ENCODE measurements at regions of chr7 and their contacts with region 1.

Region 1: DNA sequence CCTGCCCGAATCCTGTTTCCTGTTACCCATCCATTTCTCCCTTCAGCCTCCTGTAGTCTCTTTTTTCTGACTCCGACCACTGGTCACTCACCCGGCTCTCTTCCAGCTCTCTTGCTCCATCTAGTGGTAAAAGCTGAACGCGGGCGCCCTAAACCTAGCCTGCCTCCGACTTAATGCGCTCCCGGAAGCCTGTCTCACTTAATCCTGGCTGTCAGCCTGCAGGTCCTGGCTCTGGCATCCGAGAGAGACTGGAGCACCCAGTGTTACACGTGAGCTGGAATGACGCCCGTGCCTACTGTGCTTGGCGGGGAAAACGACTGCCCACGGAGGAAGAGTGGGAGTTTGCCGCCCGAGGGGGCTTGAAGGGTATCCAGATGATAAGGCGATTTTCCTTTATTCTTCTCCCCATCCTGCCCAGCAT is 10.3 kb downstream of the SUMF2 start:
- DNase-seq: peak; percentile 42 to 77 (median 55)
- ATAC-seq: peak; percentile 82
- H3K4me3 ChIP-seq: no peak overlapping the region
- H3K4me3 Mint-ChIP-seq: no peak overlapping the region
- H3K27ac ChIP-seq: no peak overlapping the region
- H3K27ac Mint-ChIP-seq: no peak overlapping the region
- H3K4me1 ChIP-seq: peaks cover 10% of the 10 kb centered on the region
- H3K4me1 Mint-ChIP-seq: peaks cover 6% of the 10 kb centered on the region
- H3K27me3 ChIP-seq: no peaks in the 10 kb centered on the region
- H3K27me3 Mint-ChIP-seq: no peaks in the 10 kb centered on the region
- CTCF ChIP-seq: peak; percentile 95

Region 2: DNA sequence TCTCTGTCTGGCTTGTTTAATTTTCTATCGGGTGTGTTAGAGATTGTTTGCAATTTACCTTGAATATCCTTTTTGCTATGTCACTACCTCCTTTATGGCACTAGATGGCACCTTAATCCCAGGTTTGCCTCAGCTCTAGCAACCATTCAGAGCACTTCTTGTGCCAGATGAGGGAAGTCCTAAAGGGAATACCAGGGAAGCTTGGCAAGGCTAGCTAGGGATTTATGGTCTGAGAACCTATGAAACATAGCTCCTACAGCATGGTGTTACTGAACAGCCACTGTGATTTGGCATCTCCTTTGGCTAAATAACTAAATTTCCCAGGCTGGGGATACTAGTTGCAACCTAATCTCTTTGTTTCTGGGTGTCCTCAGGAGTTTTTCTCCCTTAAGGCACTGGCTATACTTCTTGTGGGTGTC is 433.1 kb before region 1 on chr7:
- CTCF ChIA-PET with region 1: interaction called, 3 read pairs
- POLR2A ChIA-PET with region 1: interaction called, 3 read pairs
- intact Hi-C with region 1: loop called in 1 of 2 experiments (anchors 1 kb)
- DNase-seq: peak in 10 of 14 experiments; percentile 4 to 79 (median 14)
- ATAC-seq: peak; percentile 87
- H3K4me3 ChIP-seq: no peak overlapping the region
- H3K4me3 Mint-ChIP-seq: no peak overlapping the region
- H3K27ac ChIP-seq: no peak overlapping the region
- H3K27ac Mint-ChIP-seq: no peak overlapping the region
- H3K4me1 ChIP-seq: peaks cover 6% of the 10 kb centered on the region
- H3K4me1 Mint-ChIP-seq: peaks cover 6% of the 10 kb centered on the region
- H3K27me3 ChIP-seq: no peaks in the 10 kb centered on the region
- H3K27me3 Mint-ChIP-seq: no peaks in the 10 kb centered on the region
- CTCF ChIP-seq: peak; percentile 80

Region 3: GRCh38 chr7:55996856-55997500 is 77.4 kb before region 1 on chr7:
- CTCF ChIA-PET with region 1: interaction called, 13 read pairs
- POLR2A ChIA-PET with region 1: no interaction called
- intact Hi-C with region 1: no loop called
- DNase-seq: no peak
- ATAC-seq: no peak
- H3K4me3 ChIP-seq: no peak overlapping the region
- H3K4me3 Mint-ChIP-seq: no peak overlapping the region
- H3K27ac ChIP-seq: peak overlapping the region in 1 of 2 donors; percentile 11
- H3K27ac Mint-ChIP-seq: no peak overlapping the region
- H3K4me1 ChIP-seq: no peaks in the 10 kb centered on the region
- H3K4me1 Mint-ChIP-seq: no peaks in the 10 kb centered on the region
- H3K27me3 ChIP-seq: no peaks in the 10 kb centered on the region
- H3K27me3 Mint-ChIP-seq: no peaks in the 10 kb centered on the region
- CTCF ChIP-seq: no peak

Region 4: GRCh38 chr7:56003749-56004148 is 70.6 kb before region 1 on chr7:
- CTCF ChIA-PET with region 1: interaction called, 18 read pairs
- POLR2A ChIA-PET with region 1: interaction called, 3 read pairs
- intact Hi-C with region 1: loop called (anchors 1 kb)
- DNase-seq: no peak
- ATAC-seq: no peak
- H3K4me3 ChIP-seq: no peak overlapping the region
- H3K4me3 Mint-ChIP-seq: no peak overlapping the region
- H3K27ac ChIP-seq: no peak overlapping the region
- H3K27ac Mint-ChIP-seq: no peak overlapping the region
- H3K4me1 ChIP-seq: no peaks in the 10 kb centered on the region
- H3K4me1 Mint-ChIP-seq: no peaks in the 10 kb centered on the region
- H3K27me3 ChIP-seq: no peaks in the 10 kb centered on the region
- H3K27me3 Mint-ChIP-seq: no peaks in the 10 kb centered on the region
- CTCF ChIP-seq: no peak

Region 5: GRCh38 chr7:56009695-56010094 is 64.7 kb before region 1 on chr7:
- CTCF ChIA-PET with region 1: interaction called, 18 read pairs
- POLR2A ChIA-PET with region 1: interaction called, 3 read pairs
- intact Hi-C with region 1: loop called (anchors 1 kb)
- DNase-seq: no peak
- ATAC-seq: no peak
- H3K4me3 ChIP-seq: no peak overlapping the region
- H3K4me3 Mint-ChIP-seq: no peak overlapping the region
- H3K27ac ChIP-seq: no peak overlapping the region
- H3K27ac Mint-ChIP-seq: no peak overlapping the region
- H3K4me1 ChIP-seq: no peaks in the 10 kb centered on the region
- H3K4me1 Mint-ChIP-seq: no peaks in the 10 kb centered on the region
- H3K27me3 ChIP-seq: no peaks in the 10 kb centered on the region
- H3K27me3 Mint-ChIP-seq: no peaks in the 10 kb centered on the region
- CTCF ChIP-seq: no peak

Region 6: GRCh38 chr7:56033671-56034432 is 40.5 kb before region 1 on chr7:
- CTCF ChIA-PET with region 1: no interaction called
- POLR2A ChIA-PET with region 1: no interaction called
- intact Hi-C with region 1: loop called (anchors 2 to 5 kb)
- DNase-seq: peak; percentile 52 to 87 (median 70)
- ATAC-seq: peak; percentile 98
- H3K4me3 ChIP-seq: peak overlapping the region; percentile 67
- H3K4me3 Mint-ChIP-seq: peak overlapping the region; percentile 85
- H3K27ac ChIP-seq: peak overlapping the region in 1 of 2 donors; percentile 30
- H3K27ac Mint-ChIP-seq: peak overlapping the region; percentile 36
- H3K4me1 ChIP-seq: peaks cover 12% of the 10 kb centered on the region
- H3K4me1 Mint-ChIP-seq: peaks cover 6% of the 10 kb centered on the region
- H3K27me3 ChIP-seq: no peaks in the 10 kb centered on the region
- H3K27me3 Mint-ChIP-seq: no peaks in the 10 kb centered on the region
- CTCF ChIP-seq: peak; percentile 37

Region 7: DNA sequence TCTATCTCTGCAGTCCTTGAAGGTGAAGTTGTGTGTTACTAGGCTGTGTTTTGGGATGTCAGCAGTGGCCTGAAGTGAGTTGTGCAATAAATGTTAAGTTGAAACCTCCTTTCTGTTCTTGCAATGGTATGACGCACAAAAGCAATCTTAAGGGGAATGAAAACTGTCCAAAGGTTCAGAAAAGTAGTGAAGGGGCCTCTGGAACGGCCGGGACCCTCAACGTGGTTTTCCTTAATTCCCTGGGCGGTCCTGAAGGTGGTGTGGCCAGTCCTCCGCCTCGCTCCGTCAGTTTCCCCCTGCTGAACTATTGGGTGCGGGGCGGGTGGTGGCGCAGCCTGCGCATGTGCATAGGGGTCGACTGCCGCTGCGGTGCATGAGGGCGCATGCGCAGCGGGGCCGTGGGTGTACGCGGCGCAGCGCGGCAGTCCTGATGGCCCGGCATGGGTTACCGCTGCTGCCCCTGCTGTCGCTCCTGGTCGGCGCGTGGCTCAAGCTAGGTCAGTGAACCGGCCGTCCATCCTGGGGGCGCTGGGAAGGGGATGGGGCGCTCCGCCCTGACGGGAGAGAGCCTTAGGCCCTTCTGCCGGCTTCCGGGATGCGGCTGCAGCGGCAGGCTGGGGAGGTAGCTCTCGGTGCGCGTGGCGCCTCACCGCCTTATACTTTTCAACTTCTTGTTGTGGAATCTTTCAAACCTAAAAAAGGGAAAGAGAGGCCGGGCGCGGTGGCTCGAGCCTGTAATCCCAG is 10.3 kb before region 1 on chr7 and contains the start of gene SUMF2:
- CTCF ChIA-PET with region 1: interaction called, 12 read pairs
- POLR2A ChIA-PET with region 1: interaction called, 13 read pairs
- intact Hi-C with region 1: no loop called
- DNase-seq: peak; percentile 81 to 97 (median 89)
- ATAC-seq: peak; percentile 89
- H3K4me3 ChIP-seq: peak within 1 kb of the TSS; percentile 95
- H3K4me3 Mint-ChIP-seq: peak within 1 kb of the TSS; percentile 93
- H3K27ac ChIP-seq: peak within 1 kb of the TSS; percentile 82 to 84
- H3K27ac Mint-ChIP-seq: peak within 1 kb of the TSS; percentile 95
- H3K4me1 ChIP-seq: peaks cover 25% of the 10 kb centered on the region
- H3K4me1 Mint-ChIP-seq: peaks cover 31% of the 10 kb centered on the region
- H3K27me3 ChIP-seq: no peaks in the 10 kb centered on the region
- H3K27me3 Mint-ChIP-seq: no peaks in the 10 kb centered on the region
- CTCF ChIP-seq: no peak
- total RNA-seq, gene SUMF2: 95.8 to 102 TPM

Region 8: DNA sequence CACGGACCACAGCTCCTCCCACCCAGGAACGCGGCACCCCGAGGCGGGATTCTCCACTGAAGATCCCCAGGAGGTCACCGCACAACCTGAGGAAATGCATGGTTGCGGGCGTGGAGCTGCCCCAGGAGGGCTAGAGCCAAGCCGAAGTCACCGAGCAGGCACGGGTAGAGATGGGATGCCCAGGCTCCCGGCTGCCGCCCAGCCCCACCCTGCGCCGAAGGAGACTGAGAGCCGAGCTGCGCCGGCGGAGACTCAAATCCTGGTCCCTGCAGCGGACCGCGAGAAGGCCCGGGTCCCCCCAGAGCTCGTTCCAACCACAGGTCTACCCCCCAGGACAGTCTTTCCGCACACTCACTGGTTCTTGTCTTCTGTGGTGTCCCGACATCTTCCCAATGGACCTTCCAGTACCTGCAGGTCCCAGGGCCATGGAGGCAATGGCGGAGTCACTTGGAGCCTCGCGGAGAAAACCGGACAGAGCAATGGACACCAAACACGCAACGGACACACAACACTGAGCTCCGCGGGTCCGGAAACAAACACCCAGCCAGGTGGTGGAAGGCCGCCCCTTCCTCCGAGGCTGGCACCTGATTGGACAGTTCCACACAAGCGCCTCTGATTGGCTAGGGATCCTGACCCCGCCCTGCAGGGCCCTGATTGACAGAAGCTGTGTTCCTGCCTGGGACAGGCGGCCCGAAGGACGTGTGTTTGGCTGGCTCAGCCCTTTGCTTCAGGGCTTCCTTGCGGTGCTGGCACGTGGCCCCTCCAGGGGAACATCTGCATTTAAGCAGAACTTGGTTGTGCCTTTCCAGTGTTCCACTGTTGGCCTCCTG is 373.7 kb after region 1 on chr7:
- CTCF ChIA-PET with region 1: no interaction called
- POLR2A ChIA-PET with region 1: no interaction called
- intact Hi-C with region 1: no loop called
- DNase-seq: no peak
- ATAC-seq: no peak
- H3K4me3 ChIP-seq: no peak overlapping the region
- H3K4me3 Mint-ChIP-seq: no peak overlapping the region
- H3K27ac ChIP-seq: no peak overlapping the region
- H3K27ac Mint-ChIP-seq: no peak overlapping the region
- H3K4me1 ChIP-seq: no peaks in the 10 kb centered on the region
- H3K4me1 Mint-ChIP-seq: no peaks in the 10 kb centered on the region
- H3K27me3 ChIP-seq: no peaks in the 10 kb centered on the region
- H3K27me3 Mint-ChIP-seq: no peaks in the 10 kb centered on the region
- CTCF ChIP-seq: no peak

Measured in CD4-positive, alpha-beta T cell (primary cell).